Endothelial cell of umbilical vein (primary cell): ENCODE measurements at regions of chr20 and their contacts with region 1.

Region 1: GRCh38 chr20:7665376-7665775 is 274.9 kb downstream of the HAO1 start:
- DNase-seq: peak; percentile 50
- H3K4me3 ChIP-seq: no peak overlapping the region
- H3K27ac ChIP-seq: no peak overlapping the region
- H3K4me1 ChIP-seq: peaks cover 22% of the 10 kb centered on the region
- H3K27me3 ChIP-seq: no peaks in the 10 kb centered on the region
- CTCF ChIP-seq: no peak
- POLR2A ChIP-seq: no peak

Region 2: GRCh38 chr20:7742479-7742878 is 77.1 kb after region 1 on chr20:
- CTCF ChIA-PET with region 1: no interaction called
- POLR2A ChIA-PET with region 1: no interaction called
- dilution Hi-C with region 1: no loop called
- intact Hi-C with region 1: loop called (anchors 5 kb)
- DNase-seq: peak; percentile 79
- H3K4me3 ChIP-seq: no peak overlapping the region
- H3K27ac ChIP-seq: no peak overlapping the region
- H3K4me1 ChIP-seq: peaks cover 9% of the 10 kb centered on the region
- H3K27me3 ChIP-seq: no peaks in the 10 kb centered on the region
- CTCF ChIP-seq: no peak
- POLR2A ChIP-seq: no peak

Region 3: GRCh38 chr20:7926767-7927166 is 261.4 kb after region 1 on chr20:
- CTCF ChIA-PET with region 1: no interaction called
- POLR2A ChIA-PET with region 1: no interaction called
- dilution Hi-C with region 1: no loop called
- intact Hi-C with region 1: no loop called
- DNase-seq: peak; percentile 75
- H3K4me3 ChIP-seq: no peak overlapping the region
- H3K27ac ChIP-seq: peak overlapping the region; percentile 92
- H3K4me1 ChIP-seq: peaks cover 26% of the 10 kb centered on the region
- H3K27me3 ChIP-seq: no peaks in the 10 kb centered on the region
- CTCF ChIP-seq: peak; percentile 47 to 52
- POLR2A ChIP-seq: no peak